HEK293 (cell line): ENCODE measurements at regions of chr6 and their contacts with region 1.

Region 1: DNA sequence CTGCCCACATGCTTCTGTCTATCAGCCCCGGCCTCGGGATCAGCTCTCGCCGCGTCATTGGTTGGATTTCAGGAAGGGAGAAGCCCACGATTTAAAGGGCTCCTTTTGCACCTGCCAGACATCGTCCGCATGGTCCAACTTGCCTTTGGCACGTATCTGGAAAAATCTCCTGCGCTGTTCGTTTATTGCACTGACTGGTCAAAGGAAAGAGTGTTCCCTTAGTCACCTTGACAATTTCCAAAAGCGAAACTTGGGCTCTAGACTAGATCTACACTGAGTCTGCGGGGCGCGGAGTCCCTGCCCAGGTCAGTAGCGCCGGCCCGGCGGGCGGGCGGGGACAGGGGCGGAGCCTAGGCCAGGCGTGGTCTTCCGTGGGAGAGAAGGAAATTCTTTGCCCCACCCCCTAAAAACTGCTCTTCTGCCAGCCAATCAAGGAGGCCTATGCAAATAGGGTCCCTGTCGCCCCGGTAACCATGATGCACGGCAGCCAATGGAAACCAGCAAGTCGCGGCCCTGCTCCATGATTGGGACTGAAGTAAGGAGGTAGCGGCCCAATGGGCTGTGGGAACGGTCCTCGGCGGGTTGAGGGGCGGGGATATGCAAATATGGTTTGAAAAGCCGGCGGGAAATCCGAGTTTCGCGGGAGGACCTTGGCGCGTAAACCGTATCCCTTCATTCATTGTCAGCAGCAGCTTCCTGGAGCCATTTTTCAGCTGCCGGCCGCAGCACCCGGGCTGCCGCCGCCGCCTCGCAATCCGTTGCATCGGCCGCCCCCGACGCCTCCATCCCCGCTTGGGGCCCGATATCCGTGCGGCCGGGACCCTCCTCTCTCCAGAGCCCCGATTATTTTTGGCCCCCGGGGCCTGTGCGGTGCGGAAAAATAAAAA is at the start of gene E2F3:
- H3K4me3 ChIP-seq: peak within 1 kb of the TSS; percentile 94
- H3K27ac ChIP-seq: peak within 1 kb of the TSS; percentile 100
- H3K4me1 ChIP-seq: no peaks in the 10 kb centered on the region
- CTCF ChIP-seq: no peak

Region 2: DNA sequence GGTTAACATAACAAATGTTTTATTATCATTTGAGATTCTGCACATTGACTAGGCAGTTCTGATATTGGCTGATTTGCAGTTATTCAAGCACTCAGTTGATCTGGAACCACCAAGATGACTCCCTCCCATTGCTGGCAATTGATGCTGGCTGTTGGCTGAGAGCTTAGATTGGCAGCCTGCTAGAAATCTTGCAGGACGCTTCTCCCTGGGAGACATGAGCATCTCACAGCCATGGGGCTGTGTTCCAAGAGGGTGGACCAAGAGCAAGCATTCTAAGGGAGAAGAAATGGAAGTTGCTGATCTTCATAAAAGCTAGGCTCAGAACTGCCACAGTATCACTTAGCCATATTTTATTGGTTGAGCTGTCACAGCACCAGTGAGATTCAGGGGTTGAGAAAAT is 797.7 kb before region 1 on chr6:
- CTCF ChIA-PET with region 1: no interaction called
- POLR2A ChIA-PET with region 1: no interaction called
- H3K4me3 ChIP-seq: no peak overlapping the region
- H3K27ac ChIP-seq: no peak overlapping the region
- H3K4me1 ChIP-seq: no peaks in the 10 kb centered on the region
- CTCF ChIP-seq: no peak

Region 3: DNA sequence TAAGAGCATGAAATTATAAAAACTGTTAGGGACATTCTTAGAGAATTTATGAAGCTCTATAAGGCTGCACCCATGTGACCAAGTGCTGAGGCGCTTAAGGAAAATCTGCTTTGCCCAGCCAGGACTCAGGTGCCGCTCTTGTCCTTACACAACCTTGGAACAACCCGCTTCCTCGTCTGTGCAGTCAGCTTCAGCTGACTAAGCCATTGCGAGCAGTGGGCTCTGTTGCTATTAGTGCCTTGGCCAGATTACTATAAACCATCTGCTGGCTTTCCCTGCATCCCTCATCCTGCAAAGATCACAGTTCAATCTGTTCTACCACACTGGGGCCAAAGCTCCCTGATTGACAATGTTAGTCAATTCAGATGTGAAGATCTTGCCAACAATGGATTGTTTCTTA is 88.8 kb before region 1 on chr6:
- CTCF ChIA-PET with region 1: no interaction called
- POLR2A ChIA-PET with region 1: no interaction called
- H3K4me3 ChIP-seq: no peak overlapping the region
- H3K27ac ChIP-seq: no peak overlapping the region
- H3K4me1 ChIP-seq: peaks cover 8% of the 10 kb centered on the region; the same call in 1 of the 2 replicates
- CTCF ChIP-seq: no peak

Region 4: GRCh38 chr6:20377623-20378265 is 23.7 kb before region 1 on chr6:
- CTCF ChIA-PET with region 1: interaction called, 10 read pairs
- POLR2A ChIA-PET with region 1: interaction called, 6 read pairs
- H3K4me3 ChIP-seq: no peak overlapping the region
- H3K27ac ChIP-seq: no peak overlapping the region
- H3K4me1 ChIP-seq: no peaks in the 10 kb centered on the region
- CTCF ChIP-seq: no peak

Region 5: GRCh38 chr6:20417819-20418218 is 16.4 kb after region 1 on chr6:
- CTCF ChIA-PET with region 1: interaction called, 23 read pairs
- POLR2A ChIA-PET with region 1: interaction called, 5 read pairs
- H3K4me3 ChIP-seq: no peak overlapping the region
- H3K27ac ChIP-seq: no peak overlapping the region
- H3K4me1 ChIP-seq: peaks cover 11% of the 10 kb centered on the region
- CTCF ChIP-seq: no peak

Region 6: DNA sequence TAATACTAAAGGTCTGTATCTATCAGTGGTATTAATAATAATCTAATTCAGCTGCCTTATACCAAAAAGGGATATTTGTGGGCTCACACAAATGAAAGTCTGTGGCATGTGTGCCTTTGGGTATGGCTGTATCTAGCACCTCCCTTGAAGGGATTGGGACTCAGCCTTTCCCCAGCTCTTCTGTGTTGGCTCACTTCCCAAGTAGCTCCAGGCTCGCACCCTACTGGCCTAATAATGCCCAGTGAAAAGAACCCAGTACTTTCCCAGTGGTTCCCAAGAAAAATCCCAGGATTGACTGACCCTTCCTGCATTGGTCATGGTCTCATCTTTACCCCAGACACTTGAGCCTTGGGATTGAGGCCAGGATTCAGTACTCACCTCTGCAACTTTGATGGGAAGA is 72.1 kb after region 1 on chr6:
- CTCF ChIA-PET with region 1: interaction called, 10 read pairs
- POLR2A ChIA-PET with region 1: interaction called, 3 read pairs
- H3K4me3 ChIP-seq: no peak overlapping the region
- H3K27ac ChIP-seq: no peak overlapping the region
- H3K4me1 ChIP-seq: no peaks in the 10 kb centered on the region
- CTCF ChIP-seq: no peak